Brain microvascular endothelial cell (primary cell): ENCODE measurements at regions of chr6 and their contacts with region 1.

Region 1: GRCh38 chr6:32127717-32128592 is at the start of gene ATF6B:
- DNase-seq: peak; percentile 100
- H3K4me3 ChIP-seq: peak within 1 kb of the TSS; percentile 100
- H3K27ac ChIP-seq: peak within 1 kb of the TSS; percentile 90
- H3K27me3 ChIP-seq: no peaks in the 10 kb centered on the region
- CTCF ChIP-seq: no peak

Region 2: DNA sequence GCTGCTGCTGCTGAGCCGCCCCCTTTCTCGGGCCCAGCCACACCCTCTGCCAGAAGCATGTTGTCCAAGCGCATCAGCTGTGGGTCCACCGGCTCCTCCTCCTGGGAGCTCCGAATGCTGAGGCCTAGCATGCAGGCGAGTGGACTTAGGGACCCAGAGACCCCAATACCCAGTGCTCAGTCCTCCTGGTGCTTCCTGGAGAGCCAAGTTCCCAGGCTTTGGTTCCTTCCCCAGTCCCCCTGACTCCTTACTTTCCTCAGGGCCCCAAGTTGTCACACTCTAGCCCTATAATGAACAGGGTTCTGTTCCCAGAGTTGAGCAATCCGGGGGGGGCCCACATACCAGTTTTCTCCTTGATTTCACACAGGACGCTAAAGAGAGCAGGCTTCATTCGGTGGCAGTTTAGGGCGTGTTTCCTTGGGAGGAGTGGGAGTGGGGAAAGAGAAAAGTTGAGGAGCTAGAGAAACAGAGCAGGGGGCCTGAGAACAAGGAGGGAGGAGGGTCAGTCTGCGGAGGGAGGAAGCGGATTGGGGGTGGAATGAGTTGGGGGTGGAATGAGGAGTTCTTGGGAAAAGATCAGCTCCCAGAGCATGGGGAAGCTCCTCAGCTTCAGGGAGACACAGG is 60.5 kb after region 1 on chr6:
- in situ Hi-C with region 1: loop called (anchors 10 kb)
- DNase-seq: peak; percentile 14
- H3K4me3 ChIP-seq: peak overlapping the region; percentile 67
- H3K27ac ChIP-seq: peak overlapping the region; percentile 10
- H3K27me3 ChIP-seq: no peaks in the 10 kb centered on the region
- CTCF ChIP-seq: no peak